PC-3 (cell line): ENCODE measurements at regions of chr10 and their contacts with region 1.

Region 1: DNA sequence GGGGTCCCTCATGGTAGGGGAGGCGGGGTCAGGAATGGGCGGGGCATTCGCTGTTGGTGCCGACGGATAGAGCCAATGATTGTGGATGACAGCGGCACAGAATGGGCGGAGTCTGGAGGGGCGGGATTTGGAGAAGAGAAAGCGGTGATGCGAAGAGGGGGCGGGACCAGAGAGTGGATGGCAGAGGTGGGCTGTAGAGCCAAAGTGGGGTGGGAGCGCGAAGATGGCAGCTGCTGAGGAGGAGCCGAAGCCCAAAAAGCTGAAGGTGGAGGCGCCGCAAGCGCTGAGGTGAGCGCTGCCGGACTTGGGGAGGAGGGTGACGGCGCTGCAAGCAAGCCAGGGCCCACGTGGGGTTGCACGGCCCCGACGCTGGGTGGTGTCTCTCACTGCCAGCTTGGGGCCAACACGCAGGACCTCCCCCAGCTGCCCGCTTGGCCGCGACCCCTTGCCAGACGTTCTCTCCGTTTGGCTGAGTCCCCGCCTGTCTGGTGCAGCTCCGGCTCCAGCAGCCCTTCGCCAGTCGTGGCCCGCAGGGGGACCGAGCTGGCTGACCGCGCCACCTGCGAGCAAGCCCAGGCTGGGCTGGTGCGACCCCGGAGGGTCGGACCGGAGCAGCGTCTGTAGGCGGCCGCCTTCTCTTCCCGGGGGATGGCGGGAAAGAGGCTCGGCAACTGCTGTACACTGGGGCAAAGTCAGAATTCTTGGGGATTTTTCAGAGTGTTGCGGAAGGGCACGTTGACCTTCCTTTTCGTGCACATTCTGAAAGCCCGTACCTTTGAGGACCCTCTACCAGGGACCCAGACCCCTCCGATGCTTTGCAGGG is at the start of gene ADK:
- DNase-seq: peak; percentile 100
- ATAC-seq: peak; percentile 89
- H3K4me3 ChIP-seq: peak within 1 kb of the TSS; percentile 69
- H3K27ac ChIP-seq: peak within 1 kb of the TSS; percentile 54
- H3K4me1 ChIP-seq: peaks cover 28% of the 10 kb centered on the region
- H3K27me3 ChIP-seq: no peaks in the 10 kb centered on the region
- CTCF ChIP-seq: peak; percentile 76
- total RNA-seq, gene ADK: 221 and 256 TPM in 2 replicates

Region 2: GRCh38 chr10:73332221-73332778 is 819.0 kb before region 1 on chr10:
- CTCF ChIA-PET with region 1: no interaction called
- POLR2A ChIA-PET with region 1: no interaction called
- intact Hi-C with region 1: no loop called
- DNase-seq: no peak
- ATAC-seq: peak; percentile 42; the same call in 1 of the 2 replicates
- H3K4me3 ChIP-seq: no peak overlapping the region
- H3K27ac ChIP-seq: no peak overlapping the region
- H3K4me1 ChIP-seq: no peaks in the 10 kb centered on the region
- H3K27me3 ChIP-seq: peaks cover 43% of the 10 kb centered on the region
- CTCF ChIP-seq: no peak

Region 3: DNA sequence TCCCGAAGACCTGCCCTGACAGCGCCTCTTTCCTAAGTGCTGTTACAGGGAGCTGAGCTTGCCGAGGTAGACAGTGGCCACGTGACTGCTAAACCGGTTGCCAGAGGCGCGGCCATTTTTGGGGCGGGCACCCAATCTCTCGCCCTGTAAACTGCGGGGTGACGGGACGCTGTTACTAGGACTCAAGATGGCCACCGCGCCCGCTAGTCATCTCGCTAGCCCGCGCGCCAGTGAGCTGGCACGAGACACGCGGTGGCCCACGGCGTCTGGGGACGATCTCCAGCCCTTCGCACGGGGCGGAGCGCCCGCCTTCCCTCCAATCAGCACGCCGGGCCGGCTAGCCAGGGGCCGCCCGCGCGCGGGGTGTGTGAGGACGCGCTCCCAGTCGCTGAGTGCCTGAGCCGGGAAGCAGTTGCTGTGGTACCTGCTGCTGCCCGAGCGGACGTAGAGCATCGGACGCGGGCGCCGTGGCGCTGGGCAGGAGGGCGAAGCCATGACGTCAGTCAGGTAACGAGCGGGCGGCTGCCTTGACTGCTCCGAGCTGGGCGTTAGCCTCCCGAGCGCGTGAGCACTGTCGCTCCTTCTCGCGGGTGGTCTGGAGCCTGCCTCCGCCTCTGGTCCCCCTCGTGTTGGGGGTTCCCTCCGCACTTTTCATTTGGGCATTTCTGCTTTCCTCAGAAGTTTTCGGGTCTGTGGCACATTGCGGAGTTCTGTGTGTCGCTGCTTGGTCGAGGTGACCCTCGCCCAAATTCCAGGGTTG is 25.3 kb after region 1 on chr10:
- CTCF ChIA-PET with region 1: interaction called, 6 read pairs
- POLR2A ChIA-PET with region 1: interaction called, 9 read pairs
- intact Hi-C with region 1: loop called (anchors 1 kb)
- DNase-seq: peak; percentile 100
- ATAC-seq: peak; percentile 94
- H3K4me3 ChIP-seq: peak overlapping the region; percentile 69
- H3K27ac ChIP-seq: peak overlapping the region; percentile 76
- H3K4me1 ChIP-seq: peaks cover 40% of the 10 kb centered on the region
- H3K27me3 ChIP-seq: no peaks in the 10 kb centered on the region
- CTCF ChIP-seq: 0 out of 2 replicates have a peak, but pooled peaks have one; percentile 6

Region 4: GRCh38 chr10:74189999-74190421 is 38.7 kb after region 1 on chr10:
- CTCF ChIA-PET with region 1: interaction called, 3 read pairs
- POLR2A ChIA-PET with region 1: interaction called, 9 read pairs
- intact Hi-C with region 1: loop called (anchors 1 kb)
- DNase-seq: peak; percentile 100
- ATAC-seq: peak; percentile 90
- H3K4me3 ChIP-seq: peak overlapping the region; percentile 58
- H3K27ac ChIP-seq: peak overlapping the region; percentile 75
- H3K4me1 ChIP-seq: peaks cover 81% of the 10 kb centered on the region
- H3K27me3 ChIP-seq: no peaks in the 10 kb centered on the region
- CTCF ChIP-seq: no peak

Region 5: GRCh38 chr10:74213571-74214162 is 62.4 kb after region 1 on chr10:
- CTCF ChIA-PET with region 1: interaction called, 10 read pairs
- POLR2A ChIA-PET with region 1: interaction called, 6 read pairs
- intact Hi-C with region 1: loop called (anchors 1 kb)
- DNase-seq: peak; percentile 95
- ATAC-seq: peak; percentile 91
- H3K4me3 ChIP-seq: no peak overlapping the region
- H3K27ac ChIP-seq: no peak overlapping the region
- H3K4me1 ChIP-seq: no peaks in the 10 kb centered on the region
- H3K27me3 ChIP-seq: no peaks in the 10 kb centered on the region
- CTCF ChIP-seq: peak; percentile 100; the same call in 1 of the 2 replicates

Region 6: GRCh38 chr10:74227697-74228424 is 76.6 kb after region 1 on chr10:
- CTCF ChIA-PET with region 1: interaction called, 6 read pairs
- POLR2A ChIA-PET with region 1: interaction called, 16 read pairs
- intact Hi-C with region 1: loop called (anchors 1 kb)
- DNase-seq: peak; percentile 96
- ATAC-seq: peak; percentile 41
- H3K4me3 ChIP-seq: no peak overlapping the region
- H3K27ac ChIP-seq: peak overlapping the region; percentile 55
- H3K4me1 ChIP-seq: peaks cover 59% of the 10 kb centered on the region
- H3K27me3 ChIP-seq: no peaks in the 10 kb centered on the region
- CTCF ChIP-seq: no peak